Calu3 (cell line): ENCODE measurements at regions of chr6 and their contacts with region 1.

Region 1: GRCh38 chr6:37791156-37791919 is 28.2 kb upstream of the ZFAND3 start:
- DNase-seq: peak; percentile 98
- H3K4me3 Mint-ChIP-seq: peak overlapping the region; percentile 18
- H3K27ac Mint-ChIP-seq: peak overlapping the region; percentile 22
- H3K4me1 Mint-ChIP-seq: peaks cover 19% of the 10 kb centered on the region
- H3K27me3 Mint-ChIP-seq: no peaks in the 10 kb centered on the region
- CTCF ChIP-seq: peak; percentile 95

Region 2: DNA sequence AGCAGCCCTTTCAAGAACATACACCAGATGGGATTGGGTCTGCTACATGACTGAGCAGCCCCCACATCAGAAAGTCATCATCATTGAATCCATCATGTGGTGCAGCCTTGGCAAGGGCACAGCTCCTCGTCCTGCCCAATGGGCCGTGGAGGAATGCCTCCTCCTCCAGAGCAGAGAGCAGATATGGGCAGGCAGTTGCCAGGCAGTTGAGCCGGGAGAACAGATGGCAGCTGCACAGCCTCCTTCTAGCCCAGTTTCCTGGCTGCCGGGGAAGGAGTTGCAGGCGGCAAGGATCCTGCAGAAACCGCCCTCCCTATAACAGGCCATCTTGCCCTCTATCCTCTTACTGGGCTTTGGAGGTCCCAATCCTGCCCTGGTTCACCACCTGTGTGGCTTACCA is 16.3 kb after region 1 on chr6:
- CTCF ChIA-PET with region 1: interaction called, 11 read pairs
- intact Hi-C with region 1: no loop called
- DNase-seq: no peak
- H3K4me3 Mint-ChIP-seq: no peak overlapping the region
- H3K27ac Mint-ChIP-seq: no peak overlapping the region
- H3K4me1 Mint-ChIP-seq: peaks cover 20% of the 10 kb centered on the region
- H3K27me3 Mint-ChIP-seq: peaks cover 23% of the 10 kb centered on the region
- CTCF ChIP-seq: no peak

Region 3: DNA sequence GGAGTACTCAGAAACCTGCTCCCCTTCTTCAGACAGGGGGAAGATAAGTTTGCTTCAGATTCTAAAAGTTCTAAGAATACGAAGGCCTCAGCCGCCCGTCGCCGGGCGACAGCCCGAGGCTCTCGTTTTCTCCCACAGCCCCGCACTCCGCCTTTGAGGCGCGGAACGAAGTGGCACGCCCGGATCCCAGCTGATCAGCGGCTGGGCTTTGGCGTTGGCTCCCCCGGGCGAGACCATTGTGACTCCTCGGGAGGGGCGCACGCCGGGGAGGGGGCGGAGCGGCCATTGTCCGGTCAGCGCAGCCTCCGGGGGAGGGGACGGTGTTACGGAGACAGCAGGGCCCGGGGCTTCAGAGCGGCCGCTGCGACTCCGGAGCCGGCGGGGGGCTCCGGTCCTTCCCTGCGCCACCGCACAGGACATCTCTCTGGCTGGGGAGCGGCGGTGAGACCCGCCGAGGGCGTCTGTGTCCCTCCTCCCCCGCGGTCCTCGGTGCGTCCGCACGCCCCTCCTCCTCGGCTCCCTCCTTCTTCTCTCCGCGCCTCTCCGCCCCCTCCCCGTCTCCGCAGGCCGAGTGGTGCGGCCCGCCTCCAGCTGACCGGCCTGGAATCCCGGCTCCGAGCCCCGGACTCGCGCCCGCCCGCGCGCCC is 28.0 kb after region 1 on chr6 and contains the start of gene ZFAND3:
- CTCF ChIA-PET with region 1: interaction called, 20 read pairs
- intact Hi-C with region 1: no loop called
- DNase-seq: peak; percentile 99
- H3K4me3 Mint-ChIP-seq: peak within 1 kb of the TSS; percentile 98
- H3K27ac Mint-ChIP-seq: peak within 1 kb of the TSS; percentile 99
- H3K4me1 Mint-ChIP-seq: peaks cover 50% of the 10 kb centered on the region
- H3K27me3 Mint-ChIP-seq: peaks cover 14% of the 10 kb centered on the region
- CTCF ChIP-seq: no peak
- total RNA-seq, gene ZFAND3: 75.0 and 80.5 TPM in 2 replicates

Region 4: DNA sequence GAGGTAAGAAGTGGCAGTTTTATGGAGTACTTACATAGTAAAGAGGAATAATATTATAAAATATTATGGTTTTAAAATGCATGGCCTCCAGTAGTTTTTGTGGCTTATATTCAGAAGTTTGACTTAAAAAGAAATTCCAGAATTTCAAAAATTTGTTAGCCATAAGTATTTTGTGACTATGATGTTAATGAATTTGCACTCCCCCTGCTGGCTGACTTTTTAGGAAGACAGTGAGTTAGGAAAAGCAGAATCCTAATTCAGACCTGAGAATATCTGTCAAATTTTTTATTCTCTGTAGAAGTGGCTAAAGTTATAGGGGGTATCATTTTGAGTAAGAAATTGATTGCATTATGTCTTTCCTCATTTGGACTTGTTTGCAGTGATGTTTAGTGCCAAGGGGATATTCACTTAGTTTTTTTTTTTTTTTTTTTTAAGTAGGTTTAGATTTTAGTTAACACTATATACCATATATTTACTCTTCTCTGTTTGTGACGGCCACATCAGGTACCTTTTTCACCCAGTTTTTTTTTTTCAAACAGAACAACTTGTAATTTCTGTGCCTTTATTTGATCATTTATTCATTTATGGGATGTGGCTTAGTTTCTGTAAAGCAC is 69.0 kb after region 1 on chr6:
- CTCF ChIA-PET with region 1: interaction called, 4 read pairs
- intact Hi-C with region 1: loop called (anchors 2 kb)
- DNase-seq: peak; percentile 56
- H3K4me3 Mint-ChIP-seq: no peak overlapping the region
- H3K27ac Mint-ChIP-seq: no peak overlapping the region
- H3K4me1 Mint-ChIP-seq: peaks cover 48% of the 10 kb centered on the region
- H3K27me3 Mint-ChIP-seq: no peaks in the 10 kb centered on the region
- CTCF ChIP-seq: peak; percentile 72

Region 5: DNA sequence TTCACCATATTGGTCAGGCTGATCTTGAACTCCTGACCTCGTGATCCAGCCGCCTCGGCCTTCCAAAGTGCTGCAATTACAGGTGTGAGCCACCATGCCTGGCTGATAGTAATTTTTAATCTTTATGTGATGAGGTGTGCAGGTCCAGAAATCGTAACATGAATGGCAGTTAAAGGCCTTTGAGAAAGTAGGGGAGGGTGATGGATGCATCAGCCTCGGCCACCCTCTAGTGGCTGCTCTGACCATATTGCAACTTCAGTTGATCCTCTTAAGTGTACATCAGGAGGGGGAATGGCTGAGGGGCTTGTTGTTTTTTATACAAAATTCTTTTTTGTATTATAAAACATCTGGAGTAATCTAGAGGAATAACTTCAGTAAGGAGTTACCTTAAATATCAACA is 221.2 kb after region 1 on chr6:
- CTCF ChIA-PET with region 1: interaction called, 5 read pairs
- intact Hi-C with region 1: loop called (anchors 1 kb)
- DNase-seq: peak; percentile 54
- H3K4me3 Mint-ChIP-seq: no peak overlapping the region
- H3K27ac Mint-ChIP-seq: no peak overlapping the region
- H3K4me1 Mint-ChIP-seq: no peaks in the 10 kb centered on the region
- H3K27me3 Mint-ChIP-seq: no peaks in the 10 kb centered on the region
- CTCF ChIP-seq: peak; percentile 85

Region 6: DNA sequence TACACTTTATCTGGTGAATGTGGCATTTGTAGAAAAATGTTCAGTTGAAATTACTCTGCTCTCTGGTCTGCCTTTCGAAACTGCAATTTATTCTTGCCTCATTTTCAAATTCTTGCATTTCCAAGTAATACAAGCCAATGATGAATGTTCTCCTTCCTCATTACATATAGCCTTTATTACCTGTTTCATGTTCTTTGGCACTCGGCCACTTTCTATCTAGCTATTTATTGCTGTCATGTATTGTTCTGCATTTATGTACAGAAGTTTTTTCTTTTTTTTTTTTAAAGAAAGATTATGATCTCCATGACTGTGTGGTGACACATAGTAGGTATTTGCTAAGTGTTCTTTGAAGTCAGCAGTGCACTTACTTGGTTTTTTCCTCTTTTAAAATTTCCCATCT is 289.6 kb after region 1 on chr6:
- CTCF ChIA-PET with region 1: no interaction called
- intact Hi-C with region 1: no loop called
- DNase-seq: no peak
- H3K4me3 Mint-ChIP-seq: no peak overlapping the region
- H3K27ac Mint-ChIP-seq: peak overlapping the region; percentile 1
- H3K4me1 Mint-ChIP-seq: peaks cover 28% of the 10 kb centered on the region
- H3K27me3 Mint-ChIP-seq: no peaks in the 10 kb centered on the region
- CTCF ChIP-seq: no peak